ENCODE measurements at regions of chr2 and their contacts with region 1.

Region 1: GRCh38 chr2:99559075-99559662 is 69.4 kb upstream of the REV1 start:
- DNase-seq: peak; percentile 92
- ATAC-seq: peak; percentile 77
- H3K4me3 Mint-ChIP-seq: no peak overlapping the region
- H3K27ac Mint-ChIP-seq: peak overlapping the region; percentile 57
- H3K4me1 Mint-ChIP-seq: peaks cover 21% of the 10 kb centered on the region
- H3K27me3 Mint-ChIP-seq: no peaks in the 10 kb centered on the region
- CTCF ChIP-seq: peak; percentile 99

Region 2: GRCh38 chr2:99141110-99142108 is 417.8 kb before region 1 on chr2 and contains the start of gene C2orf15:
- CTCF ChIA-PET with region 1: no interaction called
- POLR2A ChIA-PET with region 1: interaction called, 11 read pairs
- DNase-seq: peak; percentile 97
- ATAC-seq: peak; percentile 91
- H3K4me3 Mint-ChIP-seq: peak within 1 kb of the TSS; percentile 93
- H3K27ac Mint-ChIP-seq: peak within 1 kb of the TSS; percentile 99
- H3K4me1 Mint-ChIP-seq: peaks cover 16% of the 10 kb centered on the region
- H3K27me3 Mint-ChIP-seq: peaks cover 11% of the 10 kb centered on the region
- CTCF ChIP-seq: no peak
- total RNA-seq, gene C2orf15: 6.0 to 7.0 TPM (median 6.1 TPM) in 3 replicates

Region 3: DNA sequence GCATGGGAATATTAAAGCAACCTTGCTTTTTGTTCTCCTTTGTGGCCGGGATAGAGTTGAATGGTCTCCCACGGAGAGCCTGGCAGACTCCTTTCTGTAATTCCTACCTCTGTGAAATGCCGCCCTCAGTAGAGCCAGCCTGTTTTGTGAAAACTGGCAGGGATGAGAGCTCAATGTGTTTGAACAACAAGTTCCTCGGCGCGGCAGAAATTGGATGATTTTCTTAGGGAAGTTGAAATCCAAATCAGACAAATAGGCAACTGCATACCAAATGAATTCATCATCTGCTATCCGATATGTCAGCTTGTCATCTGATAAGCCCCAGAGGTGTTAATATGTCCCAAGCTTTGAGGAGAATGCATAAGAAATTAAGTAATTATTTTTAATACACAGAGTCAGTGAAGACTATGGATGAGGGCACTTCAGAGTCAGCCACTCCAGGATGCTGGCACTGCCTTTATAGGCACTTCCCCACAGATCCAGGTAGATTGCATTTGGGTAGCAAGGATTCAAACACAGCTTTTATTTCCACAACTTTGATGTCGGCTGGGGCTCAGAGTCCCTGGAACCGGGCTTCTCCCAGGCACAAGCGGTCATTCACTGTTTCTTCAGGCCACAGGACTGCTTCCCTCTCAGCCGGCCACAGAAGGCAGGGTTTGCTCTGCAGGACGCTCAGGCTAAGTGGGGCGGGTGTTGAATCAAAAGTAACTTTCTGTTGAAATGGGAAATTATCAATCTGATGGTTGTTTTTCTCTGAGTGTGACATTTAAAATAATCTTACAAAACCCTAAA is 13.4 kb after region 1 on chr2:
- CTCF ChIA-PET with region 1: interaction called, 11 read pairs
- POLR2A ChIA-PET with region 1: no interaction called
- DNase-seq: no peak
- ATAC-seq: peak; percentile 67
- H3K4me3 Mint-ChIP-seq: 0 out of 2 replicates have a peak overlapping the region, but pooled peaks have one; percentile 7
- H3K27ac Mint-ChIP-seq: no peak overlapping the region
- H3K4me1 Mint-ChIP-seq: peaks cover 23% of the 10 kb centered on the region
- H3K27me3 Mint-ChIP-seq: no peaks in the 10 kb centered on the region; the same call in 1 of the 2 replicates
- CTCF ChIP-seq: no peak

Region 4: GRCh38 chr2:99607861-99608491 is 48.8 kb after region 1 on chr2:
- CTCF ChIA-PET with region 1: interaction called, 10 read pairs
- POLR2A ChIA-PET with region 1: no interaction called
- DNase-seq: no peak
- ATAC-seq: peak; percentile 65
- H3K4me3 Mint-ChIP-seq: no peak overlapping the region
- H3K27ac Mint-ChIP-seq: no peak overlapping the region
- H3K4me1 Mint-ChIP-seq: no peaks in the 10 kb centered on the region
- H3K27me3 Mint-ChIP-seq: no peaks in the 10 kb centered on the region
- CTCF ChIP-seq: no peak

Region 5: DNA sequence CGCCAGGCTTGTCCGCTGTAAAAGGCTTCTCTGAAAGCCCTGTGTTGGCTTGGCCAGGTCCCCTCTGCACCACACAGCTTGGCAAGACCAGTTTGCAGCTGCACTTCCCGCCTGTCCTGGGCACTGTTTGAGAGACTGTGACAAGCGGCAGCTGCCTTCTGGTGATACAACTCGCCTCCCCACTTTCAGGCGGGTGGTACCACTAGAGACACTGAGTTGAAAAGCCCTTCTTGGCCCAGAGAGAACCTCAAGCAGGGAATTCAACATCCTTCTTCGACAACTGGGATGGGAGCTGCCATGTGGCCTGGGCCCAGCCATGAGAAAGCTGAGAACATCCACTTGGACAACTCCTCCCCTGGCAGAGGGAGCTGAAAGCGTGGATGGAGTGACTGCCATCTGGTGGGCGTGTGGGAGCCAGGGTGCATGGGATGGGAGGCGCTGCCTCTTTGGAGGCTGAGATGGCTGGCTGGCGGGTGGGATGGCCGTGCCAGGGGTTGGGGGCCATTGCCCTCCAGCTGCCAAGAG is 56.1 kb after region 1 on chr2:
- CTCF ChIA-PET with region 1: interaction called, 31 read pairs
- POLR2A ChIA-PET with region 1: no interaction called
- DNase-seq: peak; percentile 47
- ATAC-seq: peak; percentile 72
- H3K4me3 Mint-ChIP-seq: no peak overlapping the region
- H3K27ac Mint-ChIP-seq: no peak overlapping the region
- H3K4me1 Mint-ChIP-seq: no peaks in the 10 kb centered on the region
- H3K27me3 Mint-ChIP-seq: no peaks in the 10 kb centered on the region; the same call in 1 of the 2 replicates
- CTCF ChIP-seq: no peak

Region 6: DNA sequence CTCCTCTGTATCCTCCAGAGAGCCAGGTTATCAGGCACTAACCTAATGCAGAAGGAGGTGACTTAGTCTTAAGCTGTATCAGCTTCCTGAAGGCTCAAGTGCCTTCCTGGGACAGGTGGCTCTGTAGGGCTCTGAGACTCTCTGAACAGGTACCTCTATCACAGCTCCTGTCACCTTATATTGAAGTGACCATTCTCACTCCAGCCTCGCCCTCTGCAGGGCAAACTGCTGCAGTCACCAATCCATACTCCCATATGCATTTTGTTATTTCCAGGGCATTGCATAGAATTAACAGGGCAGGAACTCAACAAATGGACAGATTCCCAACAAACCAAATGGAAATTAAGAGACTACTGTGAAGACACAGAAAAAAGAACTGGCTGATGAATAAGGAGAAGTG is 133.6 kb after region 1 on chr2:
- CTCF ChIA-PET with region 1: interaction called, 12 read pairs
- POLR2A ChIA-PET with region 1: no interaction called
- DNase-seq: peak; percentile 16
- ATAC-seq: no peak; the same call in 1 of the 2 replicates
- H3K4me3 Mint-ChIP-seq: no peak overlapping the region
- H3K27ac Mint-ChIP-seq: no peak overlapping the region
- H3K4me1 Mint-ChIP-seq: no peaks in the 10 kb centered on the region
- H3K27me3 Mint-ChIP-seq: no peaks in the 10 kb centered on the region
- CTCF ChIP-seq: no peak

Region 7: DNA sequence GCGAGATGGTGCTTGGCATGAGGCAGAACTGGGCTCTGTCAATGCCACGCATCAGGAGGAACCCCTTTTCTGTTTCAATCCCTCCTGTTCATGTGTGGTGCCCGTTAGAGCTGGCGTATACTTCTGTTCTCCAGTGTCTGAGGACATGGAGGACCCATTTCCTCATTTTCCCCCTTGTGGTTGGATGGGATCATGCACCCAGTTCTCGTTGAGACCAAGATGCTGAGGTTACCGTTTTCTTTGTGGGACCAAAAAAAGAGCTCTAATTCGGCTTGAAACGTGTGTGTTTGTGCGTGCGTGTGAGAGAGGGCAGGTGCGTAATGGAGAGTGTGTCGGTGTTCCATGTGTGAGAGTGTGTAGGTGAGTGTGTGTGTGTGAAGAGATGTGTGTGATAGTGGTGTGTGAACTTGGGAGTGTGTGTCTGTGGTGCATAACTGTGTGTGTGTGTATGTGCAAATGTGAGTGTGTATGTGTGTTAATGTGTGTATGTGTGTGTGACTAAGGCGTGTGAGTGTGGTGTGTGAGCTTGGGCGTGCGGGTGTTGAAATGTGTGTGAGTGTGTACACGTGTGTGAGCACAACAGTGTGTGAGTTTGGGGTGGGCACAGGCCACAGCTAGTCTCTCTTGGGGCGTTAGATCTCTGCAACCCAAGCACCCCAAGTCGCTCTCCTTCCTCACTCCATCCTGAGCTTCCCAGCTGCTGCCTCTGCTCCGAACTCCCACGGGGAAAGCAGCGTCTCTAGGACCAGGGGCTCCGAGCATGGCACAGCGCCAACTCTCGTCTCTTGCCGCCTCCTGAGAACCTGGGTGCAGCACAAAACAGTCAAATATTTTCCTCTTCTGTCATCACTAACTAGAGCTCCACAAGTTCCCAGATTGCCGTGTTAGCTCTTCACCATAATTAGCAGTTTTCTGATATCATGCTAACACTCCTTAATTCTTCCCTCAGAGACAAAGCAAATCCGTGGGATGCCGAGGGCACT is 687.3 kb after region 1 on chr2:
- CTCF ChIA-PET with region 1: interaction called, 12 read pairs
- POLR2A ChIA-PET with region 1: no interaction called
- DNase-seq: peak; percentile 29
- ATAC-seq: peak; percentile 47
- H3K4me3 Mint-ChIP-seq: no peak overlapping the region
- H3K27ac Mint-ChIP-seq: no peak overlapping the region
- H3K4me1 Mint-ChIP-seq: no peaks in the 10 kb centered on the region; the same call in 1 of the 2 replicates
- H3K27me3 Mint-ChIP-seq: peaks cover 3% of the 10 kb centered on the region; the same call in 1 of the 2 replicates
- CTCF ChIP-seq: peak; percentile 57

Measured in WTC11 (cell line).